Aorta (tissue), 5 donors: ENCODE measurements at regions of chr4 and their contacts with region 1.

Region 1: DNA sequence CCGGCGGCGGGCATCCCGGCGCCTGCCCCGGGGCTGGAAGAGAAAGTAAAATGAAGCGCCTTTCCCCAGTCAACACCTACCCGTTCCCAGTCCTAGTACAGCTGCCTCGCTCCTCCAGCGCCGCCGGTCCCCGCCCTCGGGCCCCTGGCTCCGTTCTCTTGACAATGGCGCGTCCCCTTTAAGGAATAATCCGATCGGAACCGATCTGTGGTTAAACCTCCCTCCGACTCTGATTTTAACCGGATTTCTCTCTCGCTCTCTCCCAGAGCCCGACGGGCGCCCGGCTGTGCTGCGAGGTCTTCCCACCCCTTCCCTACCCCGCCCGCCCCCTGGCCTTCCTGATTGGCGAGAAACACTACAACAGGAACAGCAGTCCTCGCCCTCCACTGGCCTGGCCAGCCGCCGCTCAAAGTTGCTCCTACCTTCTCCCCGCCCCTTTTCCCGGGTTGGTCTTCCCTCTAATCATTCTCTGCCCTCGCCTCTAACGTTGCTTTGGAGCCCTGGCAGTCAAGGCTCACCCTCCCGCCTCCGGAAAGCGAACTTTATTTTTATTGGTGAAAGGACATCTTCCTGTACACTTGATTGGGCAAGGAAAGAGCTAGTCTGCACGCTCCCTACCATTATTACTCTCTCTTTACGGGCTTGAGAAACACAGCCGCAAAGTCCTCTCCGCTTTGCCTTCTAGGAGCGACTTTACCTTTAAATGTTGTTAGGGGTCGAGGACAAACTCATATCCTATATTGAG is at the start of gene FRYL:
- DNase-seq: peak; percentile 100
- ATAC-seq: peak; percentile 97
- H3K4me3 ChIP-seq: peak within 1 kb of the TSS; percentile 82 to 99
- H3K27ac ChIP-seq: peak within 1 kb of the TSS; percentile 88 to 93
- H3K4me1 ChIP-seq: peaks cover 0 to 3% of the 10 kb centered on the region in 2 donors
- H3K27me3 ChIP-seq: no peaks in the 10 kb centered on the region
- total RNA-seq, gene FRYL: 141 TPM

Region 2: DNA sequence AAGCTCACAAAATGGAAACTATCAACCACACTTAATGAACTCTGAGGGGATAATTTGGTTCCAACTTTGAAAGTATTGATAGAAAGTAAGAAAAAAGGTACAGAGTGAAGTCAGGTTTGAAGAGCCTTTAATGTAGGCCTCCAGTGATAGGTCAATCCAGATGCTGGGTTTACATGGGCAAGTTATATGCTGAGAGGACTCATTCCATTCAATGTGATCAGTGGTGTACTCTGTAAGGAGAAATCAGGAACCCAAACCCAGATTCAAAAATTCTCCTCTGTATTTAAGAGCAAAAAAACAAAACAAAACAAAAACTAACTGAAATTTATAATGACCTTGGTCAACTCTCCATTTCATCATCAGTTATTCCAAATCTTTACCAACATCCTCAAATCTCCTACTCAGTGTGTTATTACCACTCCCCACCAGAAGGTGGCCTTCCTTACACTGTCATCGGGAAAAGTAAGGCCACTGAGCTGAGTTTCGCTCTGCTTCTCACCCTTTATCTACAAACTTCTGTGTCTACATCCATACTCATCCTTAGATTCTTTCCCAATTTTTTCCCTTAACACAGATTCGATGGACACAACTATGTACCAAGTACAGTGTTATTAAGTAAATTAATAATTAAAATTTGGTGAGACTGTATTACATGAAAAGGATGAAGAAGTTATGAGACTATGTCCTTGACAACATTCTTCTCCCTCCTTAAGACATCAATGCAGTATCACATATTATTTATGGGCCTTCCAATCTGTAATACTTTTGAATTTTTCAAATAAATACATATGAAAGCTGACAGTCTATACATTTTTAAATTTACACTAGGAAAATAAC is 201.8 kb before region 1 on chr4:
- intact Hi-C with region 1: loop called in 1 of 2 experiments (anchors 5 kb)
- DNase-seq: no peak
- ATAC-seq: peak; percentile 92
- H3K4me3 ChIP-seq: no peak overlapping the region
- H3K27ac ChIP-seq: no peak overlapping the region
- H3K4me1 ChIP-seq: no peaks in the 10 kb centered on the region
- H3K27me3 ChIP-seq: no peaks in the 10 kb centered on the region

Region 3: GRCh38 chr4:48727666-48728459 is 52.3 kb before region 1 on chr4:
- intact Hi-C with region 1: no loop called
- DNase-seq: no peak
- ATAC-seq: no peak
- H3K4me3 ChIP-seq: no peak overlapping the region
- H3K27ac ChIP-seq: no peak overlapping the region
- H3K4me1 ChIP-seq: no peaks in the 10 kb centered on the region
- H3K27me3 ChIP-seq: no peaks in the 10 kb centered on the region

Region 4: DNA sequence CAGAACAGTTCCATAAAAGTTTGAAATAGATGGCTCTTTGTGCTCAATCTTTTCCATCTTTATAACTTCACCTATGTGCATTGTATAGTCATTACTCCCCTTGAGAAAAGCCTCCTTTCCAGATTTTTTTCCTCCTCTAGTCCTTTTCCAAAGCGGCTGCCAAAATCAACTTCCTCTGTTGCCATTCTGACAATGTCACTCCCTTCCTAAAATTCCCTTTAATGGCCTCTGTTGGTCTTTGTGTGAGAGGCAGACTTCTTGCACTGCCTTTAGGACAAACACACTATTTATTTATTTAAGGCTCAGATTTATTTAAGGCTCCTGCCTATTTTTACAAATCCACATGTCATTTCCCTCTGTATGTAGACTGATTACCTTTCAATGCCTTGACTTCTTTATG is 21.6 kb after region 1 on chr4:
- intact Hi-C with region 1: loop called in 1 of 2 experiments (anchors 2 kb)
- DNase-seq: no peak
- ATAC-seq: peak; percentile 86
- H3K4me3 ChIP-seq: peak overlapping the region in 1 of 2 donors; percentile 19
- H3K27ac ChIP-seq: no peak overlapping the region
- H3K4me1 ChIP-seq: peaks cover 3 to 6% of the 10 kb centered on the region in 2 donors
- H3K27me3 ChIP-seq: no peaks in the 10 kb centered on the region

Region 5: DNA sequence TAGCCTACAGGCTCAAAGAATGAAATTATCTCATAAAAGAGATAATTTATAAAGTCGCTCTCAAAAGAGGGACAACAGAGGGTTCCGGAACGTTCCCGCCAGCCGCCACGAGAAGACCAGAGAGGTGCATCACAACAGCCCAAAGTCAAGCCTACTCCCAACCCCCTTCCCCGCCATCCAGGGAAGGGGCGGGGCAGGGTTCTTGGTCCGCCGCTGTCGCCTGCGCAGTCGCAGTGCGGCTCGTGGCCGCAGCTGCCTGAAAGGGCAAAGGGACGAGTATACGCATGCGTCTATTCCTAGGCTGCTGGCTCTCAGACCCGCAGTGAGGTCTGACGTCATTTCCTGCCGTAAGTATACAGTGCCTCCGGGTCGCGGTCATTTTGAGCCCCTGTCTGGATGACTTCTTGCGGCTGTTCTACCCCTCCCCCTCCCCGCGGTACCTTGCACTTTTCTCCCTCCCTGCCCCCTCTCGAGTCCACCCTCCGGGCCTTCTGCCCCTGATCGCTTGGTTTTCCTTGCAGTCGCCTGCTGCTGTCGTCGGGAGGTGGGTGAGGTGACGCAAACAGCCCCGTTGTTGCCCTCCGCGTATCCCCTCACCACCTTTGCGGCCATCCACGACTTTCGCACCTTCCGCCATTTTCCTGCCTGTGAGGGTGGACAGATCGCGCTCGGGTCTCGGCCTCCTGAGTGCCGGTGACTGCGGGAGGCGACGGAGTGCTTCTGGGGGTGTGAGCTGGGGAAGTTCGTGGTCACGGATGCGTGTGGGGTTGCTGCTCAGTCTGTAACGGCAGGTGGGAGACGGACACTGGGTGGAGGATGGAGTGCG is 50.7 kb after region 1 on chr4 and contains the start of gene OCIAD1:
- intact Hi-C with region 1: loop called (anchors 2 to 5 kb)
- DNase-seq: peak; percentile 97 to 98
- ATAC-seq: peak; percentile 100
- H3K4me3 ChIP-seq: peak within 1 kb of the TSS; percentile 69 to 75
- H3K27ac ChIP-seq: peak within 1 kb of the TSS; percentile 9 to 80
- H3K4me1 ChIP-seq: peaks cover 0 to 6% of the 10 kb centered on the region in 2 donors
- H3K27me3 ChIP-seq: no peaks in the 10 kb centered on the region
- total RNA-seq, gene OCIAD1: 81.5 to 102 TPM

Region 6: GRCh38 chr4:48906206-48907173 is 126.3 kb after region 1 on chr4 and contains the start of gene OCIAD2:
- intact Hi-C with region 1: loop called in 1 of 2 experiments (anchors 10 kb)
- DNase-seq: peak; percentile 77 to 82
- ATAC-seq: peak; percentile 71
- H3K4me3 ChIP-seq: peak within 1 kb of the TSS; percentile 37 to 74
- H3K27ac ChIP-seq: no peak within 1 kb of the TSS
- H3K4me1 ChIP-seq: no peaks in the 10 kb centered on the region
- H3K27me3 ChIP-seq: no peaks in the 10 kb centered on the region
- total RNA-seq, gene OCIAD2: 19.7 to 22.4 TPM

Region 7: DNA sequence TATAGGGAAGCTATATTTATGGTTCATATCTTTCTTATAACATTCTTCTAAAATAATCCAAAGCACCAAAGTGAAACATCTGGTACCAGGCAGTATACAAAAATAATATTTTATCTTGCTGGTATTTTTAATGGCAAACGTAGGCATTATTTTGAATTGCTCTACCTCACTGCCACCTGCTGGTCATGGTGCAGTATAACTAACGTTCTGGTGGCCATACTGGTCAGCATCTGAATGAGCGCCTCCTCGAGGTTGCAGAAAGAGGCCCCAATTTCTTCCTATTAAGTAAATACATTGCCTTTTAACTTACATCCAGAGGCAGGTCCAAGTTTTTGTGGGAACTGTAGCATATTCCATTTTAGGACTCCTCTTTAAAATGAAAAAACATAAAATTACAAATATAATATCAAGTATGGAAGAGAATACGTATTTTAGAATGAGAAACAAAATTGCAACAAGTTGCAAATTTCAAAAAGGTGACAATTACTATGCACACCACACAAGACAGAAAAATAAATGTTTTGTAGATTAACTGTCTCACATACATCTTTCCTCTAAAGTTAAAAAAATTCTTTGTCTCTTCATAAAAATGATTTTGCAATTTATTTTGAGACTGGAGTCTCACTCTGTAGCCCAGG is 183.0 kb after region 1 on chr4:
- intact Hi-C with region 1: loop called in 1 of 2 experiments (anchors 5 kb)
- DNase-seq: peak; percentile 77 to 78
- ATAC-seq: peak; percentile 81
- H3K4me3 ChIP-seq: no peak overlapping the region
- H3K27ac ChIP-seq: no peak overlapping the region
- H3K4me1 ChIP-seq: no peaks in the 10 kb centered on the region
- H3K27me3 ChIP-seq: no peaks in the 10 kb centered on the region